CD4-positive, alpha-beta memory T cell (primary cell): ENCODE measurements at regions of chr4 and their contacts with region 1.

Region 1: GRCh38 chr4:169010125-169011023 is at the start of gene CBR4:
- DNase-seq: peak; percentile 92 to 98 (median 97)
- H3K4me3 ChIP-seq: peak within 1 kb of the TSS; percentile 84
- H3K4me3 Mint-ChIP-seq: peak within 1 kb of the TSS; percentile 91 to 99 (median 94)
- H3K27ac ChIP-seq: peak within 1 kb of the TSS; percentile 94
- H3K27ac Mint-ChIP-seq: peak within 1 kb of the TSS; percentile 96 to 100 (median 98)
- H3K4me1 ChIP-seq: peaks cover 35% of the 10 kb centered on the region
- H3K4me1 Mint-ChIP-seq: peaks cover 22 to 42% (median 27%) of the 10 kb centered on the region in 4 donors
- H3K27me3 ChIP-seq: no peaks in the 10 kb centered on the region
- H3K27me3 Mint-ChIP-seq: peaks cover 2 to 3% of the 10 kb centered on the region in 2 donors
- total RNA-seq, gene CBR4: 19.9 to 20.0 TPM

Region 2: GRCh38 chr4:168318266-168318895 is 692.0 kb before region 1 on chr4 and contains the start of gene DDX60:
- CTCF ChIA-PET with region 1: interaction called, 3 read pairs
- POLR2A ChIA-PET with region 1: interaction called, 3 read pairs
- intact Hi-C with region 1: loop called (anchors 1 kb)
- DNase-seq: peak; percentile 82 to 93 (median 86)
- H3K4me3 ChIP-seq: peak within 1 kb of the TSS; percentile 68 to 98
- H3K4me3 Mint-ChIP-seq: peak within 1 kb of the TSS; percentile 95 to 98 (median 97)
- H3K27ac ChIP-seq: peak within 1 kb of the TSS; percentile 97
- H3K27ac Mint-ChIP-seq: peak within 1 kb of the TSS; percentile 98 to 99 (median 98)
- H3K4me1 ChIP-seq: peaks cover 28% of the 10 kb centered on the region
- H3K4me1 Mint-ChIP-seq: peaks cover 37 to 53% (median 40%) of the 10 kb centered on the region in 4 donors
- H3K27me3 ChIP-seq: no peaks in the 10 kb centered on the region
- H3K27me3 Mint-ChIP-seq: no peaks in the 10 kb centered on the region
- total RNA-seq, gene DDX60: 33.1 to 33.9 TPM

Region 3: DNA sequence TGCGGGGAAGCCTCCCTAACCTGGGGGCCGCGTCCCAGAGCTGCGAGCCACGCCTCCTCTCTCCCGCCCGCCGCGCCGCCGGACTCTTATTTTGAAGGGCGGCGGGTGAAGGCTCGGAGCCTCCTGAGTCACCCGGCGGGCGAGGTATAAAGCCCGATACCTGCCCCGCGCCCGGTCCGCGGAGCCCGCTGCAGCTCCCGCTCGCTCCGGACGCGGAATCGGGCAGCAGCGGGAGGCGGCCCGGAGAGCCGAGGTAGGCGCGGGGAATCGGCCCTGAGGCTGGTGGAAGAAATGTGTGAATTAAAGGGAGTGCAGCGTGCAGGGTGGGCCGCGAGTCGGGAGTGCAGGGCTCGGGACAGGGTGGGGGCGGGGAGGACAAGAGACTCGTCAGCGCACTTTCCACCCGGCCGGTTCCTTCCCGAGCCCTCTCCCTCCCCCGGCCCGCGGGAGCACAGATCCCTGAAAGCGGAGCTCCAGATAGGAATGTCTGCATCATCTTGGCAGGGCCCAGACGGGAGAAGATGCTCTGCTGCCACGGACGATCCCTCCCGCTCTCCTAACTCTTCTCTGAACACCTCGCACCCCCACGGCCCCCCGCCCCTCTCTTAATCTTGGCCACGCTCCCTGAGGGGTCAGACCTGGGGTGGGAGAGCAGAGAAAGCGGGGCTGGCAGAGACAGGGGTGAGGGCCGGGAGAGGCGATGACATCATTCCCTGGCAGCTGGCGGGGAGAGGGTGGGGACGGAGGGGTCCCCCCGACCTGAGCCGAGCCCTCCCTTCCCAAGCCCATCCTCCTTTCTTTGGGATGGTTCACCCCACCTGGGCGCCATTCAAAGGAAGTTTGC is 178.2 kb before region 1 on chr4:
- CTCF ChIA-PET with region 1: interaction called, 4 read pairs
- POLR2A ChIA-PET with region 1: interaction called, 3 read pairs
- intact Hi-C with region 1: loop called (anchors 5 kb)
- DNase-seq: peak; percentile 38 to 52 (median 47)
- H3K4me3 ChIP-seq: peak overlapping the region; percentile 34 to 53
- H3K4me3 Mint-ChIP-seq: peak overlapping the region; percentile 77 to 92 (median 86)
- H3K27ac ChIP-seq: no peak overlapping the region
- H3K27ac Mint-ChIP-seq: peak overlapping the region in 1 of 7 donors; percentile 10
- H3K4me1 ChIP-seq: peaks cover 13% of the 10 kb centered on the region
- H3K4me1 Mint-ChIP-seq: peaks cover 5 to 19% (median 11%) of the 10 kb centered on the region in 4 donors
- H3K27me3 ChIP-seq: peaks cover 23% of the 10 kb centered on the region
- H3K27me3 Mint-ChIP-seq: peaks cover 38 to 51% of the 10 kb centered on the region in 2 donors

Region 4: DNA sequence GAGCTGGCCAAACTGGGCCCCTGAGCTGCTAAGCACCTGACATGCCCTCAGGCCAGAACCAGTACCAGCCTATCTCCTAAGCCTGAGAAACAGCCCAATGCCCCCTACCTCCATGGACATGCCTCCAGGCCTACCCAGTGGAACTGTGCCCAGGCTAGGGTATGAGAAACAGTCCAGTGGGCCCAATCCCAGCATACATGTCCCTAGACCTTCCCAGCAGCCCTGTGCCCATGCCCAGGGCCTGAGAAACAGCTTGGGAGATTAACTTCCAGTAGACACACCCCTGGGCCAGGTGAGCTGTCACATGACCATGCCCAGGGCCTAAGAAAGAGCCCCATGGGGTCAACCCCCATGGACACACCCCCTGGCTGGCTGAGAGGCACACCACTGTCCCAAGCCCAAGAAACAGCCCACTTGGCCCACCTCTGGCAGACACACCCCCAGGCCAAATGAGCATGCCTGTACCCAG is 79.2 kb before region 1 on chr4:
- CTCF ChIA-PET with region 1: no interaction called
- POLR2A ChIA-PET with region 1: no interaction called
- intact Hi-C with region 1: no loop called
- DNase-seq: no peak
- H3K4me3 ChIP-seq: no peak overlapping the region
- H3K4me3 Mint-ChIP-seq: no peak overlapping the region
- H3K27ac ChIP-seq: no peak overlapping the region
- H3K27ac Mint-ChIP-seq: no peak overlapping the region
- H3K4me1 ChIP-seq: no peaks in the 10 kb centered on the region
- H3K4me1 Mint-ChIP-seq: peaks cover 0 to 4% (median under 1%) of the 10 kb centered on the region in 4 donors
- H3K27me3 ChIP-seq: no peaks in the 10 kb centered on the region
- H3K27me3 Mint-ChIP-seq: peaks cover 0 to 1% of the 10 kb centered on the region in 2 donors

Region 5: DNA sequence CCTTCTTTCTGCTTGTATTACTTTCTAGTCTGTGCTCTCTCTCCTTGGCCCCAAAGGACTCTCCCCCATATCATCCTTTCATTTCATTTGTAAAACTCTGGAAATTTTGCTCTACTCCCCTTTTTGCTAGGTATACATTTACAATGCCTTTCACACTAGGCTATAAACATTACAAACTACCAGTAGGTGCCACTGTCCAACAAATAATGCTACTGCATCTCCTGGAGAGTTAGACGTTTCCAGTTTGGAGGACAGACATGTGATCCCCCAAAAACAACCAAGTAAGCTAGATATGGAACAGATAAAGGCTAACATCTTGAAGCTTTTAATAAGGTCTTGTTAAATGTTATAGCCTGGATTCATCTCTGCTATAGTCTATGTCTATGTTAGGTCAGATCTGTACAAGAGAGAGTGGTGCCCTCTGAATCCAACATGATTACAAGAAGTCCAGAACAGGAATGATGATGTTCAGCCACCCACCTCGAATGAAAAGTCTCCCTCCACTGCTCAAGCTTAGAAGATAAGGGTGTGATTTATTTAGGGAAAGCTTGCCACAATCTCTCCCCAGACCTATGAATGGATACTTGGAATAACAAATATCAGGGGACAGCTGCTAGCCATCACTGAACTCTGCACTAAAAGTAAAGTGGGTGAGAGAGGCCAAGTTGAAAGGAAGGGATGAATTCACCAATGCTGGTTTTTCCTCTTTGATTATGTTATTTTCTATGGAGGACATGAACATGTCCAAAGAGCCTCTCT is 14.7 kb before region 1 on chr4:
- CTCF ChIA-PET with region 1: interaction called, 26 read pairs
- POLR2A ChIA-PET with region 1: interaction called, 7 read pairs
- intact Hi-C with region 1: no loop called
- DNase-seq: no peak
- H3K4me3 ChIP-seq: no peak overlapping the region
- H3K4me3 Mint-ChIP-seq: no peak overlapping the region
- H3K27ac ChIP-seq: no peak overlapping the region
- H3K27ac Mint-ChIP-seq: peak overlapping the region in 1 of 7 donors; percentile 41
- H3K4me1 ChIP-seq: no peaks in the 10 kb centered on the region
- H3K4me1 Mint-ChIP-seq: no peaks in the 10 kb centered on the region
- H3K27me3 ChIP-seq: no peaks in the 10 kb centered on the region
- H3K27me3 Mint-ChIP-seq: no peaks in the 10 kb centered on the region

Region 6: GRCh38 chr4:169612871-169613859 is 602.8 kb after region 1 on chr4:
- CTCF ChIA-PET with region 1: interaction called, 4 read pairs
- POLR2A ChIA-PET with region 1: interaction called, 8 read pairs
- intact Hi-C with region 1: loop called (anchors 1 kb)
- DNase-seq: peak; percentile 66 to 76 (median 74)
- H3K4me3 ChIP-seq: peak overlapping the region; percentile 37 to 68
- H3K4me3 Mint-ChIP-seq: peak overlapping the region; percentile 94 to 98 (median 96)
- H3K27ac ChIP-seq: peak overlapping the region; percentile 98
- H3K27ac Mint-ChIP-seq: peak overlapping the region; percentile 99 to 100 (median 99)
- H3K4me1 ChIP-seq: peaks cover 30% of the 10 kb centered on the region
- H3K4me1 Mint-ChIP-seq: peaks cover 23 to 45% (median 31%) of the 10 kb centered on the region in 4 donors
- H3K27me3 ChIP-seq: no peaks in the 10 kb centered on the region
- H3K27me3 Mint-ChIP-seq: no peaks in the 10 kb centered on the region

Region 7: GRCh38 chr4:169757575-169758184 is 747.3 kb after region 1 on chr4 and contains the start of gene HPF1:
- CTCF ChIA-PET with region 1: no interaction called
- POLR2A ChIA-PET with region 1: no interaction called
- intact Hi-C with region 1: loop called (anchors 2 kb)
- DNase-seq: peak; percentile 89 to 93 (median 90)
- H3K4me3 ChIP-seq: peak within 1 kb of the TSS; percentile 83 to 89
- H3K4me3 Mint-ChIP-seq: peak within 1 kb of the TSS; percentile 83 to 93 (median 88)
- H3K27ac ChIP-seq: peak within 1 kb of the TSS; percentile 54
- H3K27ac Mint-ChIP-seq: peak within 1 kb of the TSS; percentile 12 to 85 (median 53)
- H3K4me1 ChIP-seq: peaks cover 18% of the 10 kb centered on the region
- H3K4me1 Mint-ChIP-seq: peaks cover 23 to 33% (median 26%) of the 10 kb centered on the region in 4 donors
- H3K27me3 ChIP-seq: no peaks in the 10 kb centered on the region
- H3K27me3 Mint-ChIP-seq: no peaks in the 10 kb centered on the region
- total RNA-seq, gene HPF1: 14.4 to 15.0 TPM